ENCODE measurements at regions of chr13 and their contacts with region 1.

Region 1: GRCh38 chr13:112968908-112969691 is at the start of gene MCF2L:
- DNase-seq: peak in 1 of 2 experiments; percentile 72
- H3K4me3 ChIP-seq: peak within 1 kb of the TSS; percentile 41 to 73 (median 44)
- H3K27ac ChIP-seq: no peak within 1 kb of the TSS
- H3K4me1 ChIP-seq: peaks cover 0 to 3% (median under 1%) of the 10 kb centered on the region in 4 experiments; a peak in 2 of 7 replicates
- H3K27me3 ChIP-seq: peaks cover 0 to 8% (median 4%) of the 10 kb centered on the region in 4 experiments; a peak in 4 of 7 replicates
- CTCF ChIP-seq: peak in 1 of 3 experiments; percentile 40; a peak in 1 of 4 replicates
- EP300 ChIP-seq: no peak
- POLR2A ChIP-seq: no peak
- RAD21 ChIP-seq: peak; percentile 28 to 35; a peak in 3 of 4 replicates
- total RNA-seq, gene MCF2L: 22.9 and 24.4 TPM in 2 replicates

Region 2: GRCh38 chr13:112942689-112943308 is 26.3 kb before region 1 on chr13:
- CTCF ChIA-PET with region 1: interaction called, 13 read pairs
- POLR2A ChIA-PET with region 1: interaction called, 3 read pairs
- DNase-seq: peak; percentile 85 to 99
- H3K4me3 ChIP-seq: peak overlapping the region in 3 of 4 experiments; percentile 43 to 71 (median 56); a peak in 7 of 8 replicates
- H3K27ac ChIP-seq: no peak overlapping the region
- H3K4me1 ChIP-seq: no peaks in the 10 kb centered on the region; a peak in 2 of 7 replicates
- H3K27me3 ChIP-seq: no peaks in the 10 kb centered on the region
- CTCF ChIP-seq: peak; percentile 93 to 99 (median 99)
- EP300 ChIP-seq: no peak
- POLR2A ChIP-seq: no peak
- RAD21 ChIP-seq: peak; percentile 94 to 95

Region 3: DNA sequence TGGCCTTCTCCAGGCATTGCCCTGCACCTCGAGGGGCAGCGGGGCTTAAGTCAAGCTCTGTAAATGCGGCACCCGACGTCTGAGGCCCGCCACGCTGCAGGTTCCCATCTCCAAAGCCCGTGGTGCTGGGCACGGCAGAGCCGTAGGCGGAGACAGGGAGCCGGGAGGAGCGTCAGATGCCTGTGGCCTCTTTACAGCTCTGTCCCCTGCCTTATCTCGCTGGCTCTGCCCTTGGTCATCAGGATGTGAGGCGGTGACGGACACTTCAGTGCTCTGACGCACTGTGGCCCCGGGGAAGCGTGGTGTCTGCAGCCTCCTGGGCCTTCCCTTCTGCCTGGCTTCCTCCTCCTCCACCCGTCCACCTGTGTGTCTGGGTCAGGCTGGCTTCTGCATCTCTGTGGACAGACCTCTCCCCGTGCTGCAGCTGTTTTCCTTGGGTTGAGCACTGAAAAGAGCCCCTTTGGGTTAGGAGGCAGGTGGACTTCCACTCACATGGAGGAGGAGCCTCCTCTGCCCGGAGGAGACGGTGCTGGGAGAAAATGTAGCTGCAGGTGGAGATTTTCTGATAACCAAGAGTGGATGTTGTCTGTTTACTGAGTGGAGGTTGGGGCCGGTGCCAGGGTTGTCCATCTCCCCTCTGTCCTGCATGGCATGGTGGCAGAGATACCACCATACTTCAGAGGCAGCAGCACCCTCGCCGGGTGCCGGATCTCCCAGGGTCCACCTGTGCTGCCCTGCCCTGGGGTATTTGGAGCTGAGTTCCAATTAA is 14.5 kb after region 1 on chr13:
- CTCF ChIA-PET with region 1: interaction called, 14 read pairs
- POLR2A ChIA-PET with region 1: interaction called, 5 read pairs
- DNase-seq: no peak
- H3K4me3 ChIP-seq: no peak overlapping the region
- H3K27ac ChIP-seq: no peak overlapping the region
- H3K4me1 ChIP-seq: peaks cover 0 to 7% (median under 1%) of the 10 kb centered on the region in 4 experiments; a peak in 3 of 7 replicates
- H3K27me3 ChIP-seq: no peaks in the 10 kb centered on the region
- CTCF ChIP-seq: no peak
- EP300 ChIP-seq: no peak
- POLR2A ChIP-seq: no peak
- RAD21 ChIP-seq: no peak

Region 4: DNA sequence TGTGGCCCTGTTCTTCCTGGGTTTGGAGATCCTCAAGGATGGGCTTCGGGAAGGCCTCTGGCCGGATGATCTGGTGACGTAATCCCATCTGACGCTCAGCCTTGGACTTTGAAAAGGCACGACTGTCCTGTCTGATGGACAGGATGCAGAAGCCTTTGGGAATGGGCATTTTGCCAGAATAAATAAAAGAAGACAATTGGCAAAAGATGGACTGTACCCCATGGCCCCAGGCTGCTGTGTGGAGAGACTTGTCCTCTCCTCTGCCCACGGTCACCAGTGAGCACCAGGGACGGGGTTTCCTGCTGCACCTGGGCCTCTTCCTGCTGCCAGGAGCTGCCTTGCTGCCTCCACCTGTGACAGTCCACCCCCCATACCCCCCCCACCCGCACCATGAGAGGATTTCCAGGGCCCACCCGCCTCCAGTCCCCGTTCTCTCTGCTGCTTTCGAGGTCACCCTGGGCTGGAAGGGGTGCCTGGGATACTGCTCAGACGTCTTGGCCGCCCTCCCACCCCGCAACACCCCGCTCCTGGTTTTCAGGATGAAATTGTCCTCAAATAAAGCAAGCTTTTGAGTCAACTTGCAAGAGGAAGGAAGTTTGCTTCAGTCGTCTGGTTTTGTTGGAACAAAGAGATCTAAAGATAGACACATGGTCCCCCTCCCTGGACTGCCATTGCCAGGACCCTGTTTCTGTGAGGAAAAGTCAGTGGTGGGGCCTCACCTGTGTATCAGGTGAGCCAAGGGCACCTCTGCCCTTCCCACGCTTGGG is 40.8 kb after region 1 on chr13:
- CTCF ChIA-PET with region 1: interaction called, 13 read pairs
- POLR2A ChIA-PET with region 1: no interaction called
- DNase-seq: no peak
- H3K4me3 ChIP-seq: no peak overlapping the region
- H3K27ac ChIP-seq: no peak overlapping the region
- H3K4me1 ChIP-seq: no peaks in the 10 kb centered on the region; a peak in 1 of 7 replicates
- H3K27me3 ChIP-seq: no peaks in the 10 kb centered on the region
- CTCF ChIP-seq: no peak
- EP300 ChIP-seq: no peak
- POLR2A ChIP-seq: no peak
- RAD21 ChIP-seq: no peak

Measured in H1 (cell line).